ENCODE measurements at regions of chr1 and their contacts with region 1.

Region 1: DNA sequence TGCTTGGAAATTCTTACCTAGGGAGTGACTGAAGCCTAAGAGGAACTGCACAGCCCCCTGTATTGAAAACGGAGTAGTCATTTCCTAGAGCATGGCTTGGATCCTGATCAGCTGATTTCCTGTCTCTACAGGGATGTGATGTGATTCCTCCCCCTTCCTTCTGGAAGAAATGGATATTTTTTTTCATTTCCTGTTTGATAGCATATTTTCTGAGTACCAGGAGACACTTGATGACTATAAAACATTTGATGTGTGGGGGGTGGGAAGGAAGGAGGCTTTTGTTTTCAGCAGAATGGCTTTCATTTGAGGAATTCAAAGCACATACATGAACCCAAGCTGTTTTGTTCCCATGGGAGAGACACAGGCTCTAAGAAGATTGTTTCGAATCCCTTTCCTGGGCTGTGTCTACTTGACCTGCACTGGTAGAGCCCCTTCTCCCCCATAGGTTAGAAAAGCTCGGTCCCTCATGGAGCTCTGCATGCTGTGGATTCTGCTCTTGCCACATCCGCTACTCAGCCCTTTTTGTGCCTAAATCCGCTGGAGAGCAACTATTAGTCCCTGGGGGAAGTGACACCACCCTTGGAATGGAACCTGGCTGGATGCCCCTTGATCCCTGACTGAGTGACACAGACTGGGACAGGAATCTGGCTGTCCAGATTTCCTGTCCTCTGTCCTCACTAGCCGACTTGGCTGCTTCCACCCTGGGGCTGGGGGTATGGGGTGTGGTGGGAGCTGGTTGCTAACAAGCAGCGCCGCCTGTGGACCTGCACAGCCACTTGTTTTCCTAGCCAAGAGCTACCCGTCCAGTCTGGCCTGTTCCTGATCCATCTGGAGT is 71.8 kb upstream of the MACF1 start:
- DNase-seq: peak; percentile 77
- H3K4me3 Mint-ChIP-seq: peak overlapping the region; percentile 10
- H3K27ac Mint-ChIP-seq: peak overlapping the region; percentile 85
- H3K4me1 Mint-ChIP-seq: peaks cover 52% of the 10 kb centered on the region
- H3K27me3 Mint-ChIP-seq: no peaks in the 10 kb centered on the region
- CTCF ChIP-seq: peak; percentile 14

Region 2: DNA sequence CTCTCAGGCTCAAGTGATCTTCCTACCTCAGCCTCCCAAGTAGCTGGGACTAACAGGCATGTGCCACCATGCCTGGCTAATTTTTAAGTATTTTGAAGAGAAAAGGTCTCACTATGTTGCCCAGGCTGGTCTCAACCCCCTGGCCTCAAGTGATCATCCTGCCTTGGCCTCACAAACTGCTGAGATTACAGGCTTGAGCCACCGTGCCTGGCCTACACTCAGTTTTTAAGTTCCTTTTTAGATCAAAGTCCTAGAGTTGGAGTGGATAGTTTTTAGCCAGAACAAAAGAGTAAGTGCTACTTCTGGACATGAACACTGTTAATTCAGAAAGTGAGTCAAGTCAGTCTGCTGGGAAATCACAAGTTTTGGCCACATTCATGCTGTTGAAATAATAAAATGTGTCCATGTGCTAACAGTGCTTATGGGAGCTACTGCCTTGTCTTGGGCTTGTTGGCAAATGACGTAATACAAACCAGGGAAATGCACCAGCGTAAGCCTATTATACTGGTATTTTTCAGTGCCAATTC is 22.3 kb before region 1 on chr1:
- CTCF ChIA-PET with region 1: interaction called, 13 read pairs
- POLR2A ChIA-PET with region 1: interaction called, 427 read pairs
- intact Hi-C with region 1: no loop called
- DNase-seq: peak; percentile 82
- H3K4me3 Mint-ChIP-seq: peak overlapping the region; percentile 30
- H3K27ac Mint-ChIP-seq: no peak overlapping the region
- H3K4me1 Mint-ChIP-seq: peaks cover 20% of the 10 kb centered on the region
- H3K27me3 Mint-ChIP-seq: no peaks in the 10 kb centered on the region
- CTCF ChIP-seq: no peak

Region 3: GRCh38 chr1:39116868-39117728 is 15.6 kb before region 1 on chr1:
- CTCF ChIA-PET with region 1: interaction called, 7 read pairs
- POLR2A ChIA-PET with region 1: interaction called, 427 read pairs
- intact Hi-C with region 1: no loop called
- DNase-seq: peak; percentile 65
- H3K4me3 Mint-ChIP-seq: no peak overlapping the region
- H3K27ac Mint-ChIP-seq: peak overlapping the region; percentile 5
- H3K4me1 Mint-ChIP-seq: peaks cover 8% of the 10 kb centered on the region
- H3K27me3 Mint-ChIP-seq: no peaks in the 10 kb centered on the region
- CTCF ChIP-seq: no peak

Region 4: DNA sequence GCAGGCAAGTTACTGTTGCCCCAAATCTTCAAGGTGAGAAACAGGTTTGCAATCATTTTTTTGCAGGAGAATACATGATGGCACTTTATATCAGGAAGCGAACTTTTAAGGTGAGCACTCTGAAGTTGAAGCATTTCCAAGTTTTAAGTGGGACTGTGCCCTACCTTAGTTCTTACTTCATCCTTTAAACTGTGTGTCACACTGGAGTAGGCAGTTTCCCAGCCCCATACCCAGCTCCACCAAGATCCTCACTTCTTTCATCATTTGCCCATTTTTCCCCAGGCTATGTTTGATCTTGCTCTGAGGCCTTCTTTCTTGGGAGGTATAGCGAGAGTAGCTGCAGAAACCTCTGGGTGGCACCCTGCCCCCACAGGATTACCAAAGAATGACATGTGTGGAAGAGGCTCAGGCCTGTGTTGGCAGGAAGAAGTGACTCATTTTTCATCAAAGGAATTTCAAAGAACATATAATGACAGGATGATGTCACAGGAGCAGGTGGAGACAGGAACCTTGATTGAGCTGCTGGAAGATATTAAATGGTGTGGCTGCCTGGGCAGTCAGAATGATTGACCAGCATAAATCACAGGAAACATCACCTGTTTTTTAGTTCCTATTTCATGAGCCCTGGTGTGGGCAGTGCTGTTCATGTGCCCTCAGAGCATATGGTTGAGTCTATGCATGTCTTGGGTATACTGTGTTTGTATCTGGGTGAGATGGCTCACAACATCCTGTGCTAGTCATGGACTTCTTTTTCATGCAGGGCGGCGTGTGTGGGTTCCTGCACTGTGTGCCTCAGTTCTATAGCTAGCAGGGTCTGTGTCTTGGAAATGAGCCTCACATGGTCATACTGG is 51.0 kb after region 1 on chr1:
- CTCF ChIA-PET with region 1: interaction called, 57 read pairs
- POLR2A ChIA-PET with region 1: interaction called, 121 read pairs
- intact Hi-C with region 1: loop called (anchors 1 kb)
- DNase-seq: peak; percentile 98
- H3K4me3 Mint-ChIP-seq: peak overlapping the region; percentile 53
- H3K27ac Mint-ChIP-seq: peak overlapping the region; percentile 88
- H3K4me1 Mint-ChIP-seq: peaks cover 52% of the 10 kb centered on the region
- H3K27me3 Mint-ChIP-seq: no peaks in the 10 kb centered on the region
- CTCF ChIP-seq: peak; percentile 29

Region 5: DNA sequence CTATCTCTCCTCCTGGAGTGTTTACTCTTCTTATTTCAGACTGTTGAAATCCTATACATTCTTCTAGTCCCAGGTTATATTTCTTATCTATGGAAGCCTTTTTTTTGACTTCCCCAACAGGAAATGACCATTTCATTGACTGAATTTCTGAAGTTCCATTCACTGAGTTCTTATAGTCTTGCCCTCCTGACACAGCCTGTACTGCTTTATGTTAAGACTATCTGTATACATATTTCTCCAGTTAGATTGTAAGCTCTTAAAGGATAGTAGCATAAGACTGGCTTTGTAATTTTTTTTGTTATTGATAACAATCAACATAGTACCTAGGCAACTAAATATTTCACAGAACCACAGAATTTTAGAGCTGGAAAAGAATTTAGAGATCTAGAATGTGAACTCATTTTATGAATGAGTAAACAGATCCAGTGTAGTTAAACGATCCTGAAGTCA is 56.9 kb after region 1 on chr1:
- CTCF ChIA-PET with region 1: interaction called, 57 read pairs
- POLR2A ChIA-PET with region 1: interaction called, 121 read pairs
- intact Hi-C with region 1: loop called (anchors 1 kb)
- DNase-seq: no peak
- H3K4me3 Mint-ChIP-seq: no peak overlapping the region
- H3K27ac Mint-ChIP-seq: peak overlapping the region; percentile 96
- H3K4me1 Mint-ChIP-seq: peaks cover 56% of the 10 kb centered on the region
- H3K27me3 Mint-ChIP-seq: no peaks in the 10 kb centered on the region
- CTCF ChIP-seq: no peak

Region 6: DNA sequence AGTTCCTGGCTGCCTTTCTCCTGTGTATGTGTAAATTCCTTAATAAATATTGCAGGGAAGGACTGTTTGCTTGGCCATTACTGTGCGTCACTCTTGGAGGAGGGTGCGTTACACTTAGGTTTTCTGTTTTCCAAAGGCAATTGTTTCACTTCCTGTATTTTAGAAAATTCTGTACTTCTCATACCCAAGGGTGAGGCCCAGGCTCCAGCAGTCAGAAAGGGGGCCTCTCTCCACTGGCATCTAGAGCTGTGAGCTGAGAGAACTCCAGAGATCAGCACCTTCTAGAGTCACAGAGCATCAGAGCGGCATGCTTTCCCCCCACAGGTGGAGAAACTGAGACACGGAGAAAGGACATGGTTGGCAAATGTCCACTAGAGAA is 1290.5 kb after region 1 on chr1:
- CTCF ChIA-PET with region 1: no interaction called
- POLR2A ChIA-PET with region 1: no interaction called
- intact Hi-C with region 1: no loop called
- DNase-seq: no peak
- H3K4me3 Mint-ChIP-seq: no peak overlapping the region
- H3K27ac Mint-ChIP-seq: no peak overlapping the region
- H3K4me1 Mint-ChIP-seq: peaks cover 9% of the 10 kb centered on the region
- H3K27me3 Mint-ChIP-seq: no peaks in the 10 kb centered on the region
- CTCF ChIP-seq: no peak